Psoas muscle (tissue), 8 donors: ENCODE measurements at regions of chr7 and their contacts with region 1.

Region 1: GRCh38 chr7:150448789-150449147 is 1.7 kb upstream of the GIMAP8 start:
- DNase-seq: peak; percentile 61 to 76
- ATAC-seq: peak in 2 of 4 donors; percentile 62 to 74
- H3K4me3 ChIP-seq: no peak overlapping the region
- H3K27ac ChIP-seq: no peak overlapping the region
- H3K4me1 ChIP-seq: no peaks in the 10 kb centered on the region
- H3K27me3 ChIP-seq: peaks cover 0 to 29% (median 12%) of the 10 kb centered on the region in 3 donors
- CTCF ChIP-seq: peak; percentile 62

Region 2: DNA sequence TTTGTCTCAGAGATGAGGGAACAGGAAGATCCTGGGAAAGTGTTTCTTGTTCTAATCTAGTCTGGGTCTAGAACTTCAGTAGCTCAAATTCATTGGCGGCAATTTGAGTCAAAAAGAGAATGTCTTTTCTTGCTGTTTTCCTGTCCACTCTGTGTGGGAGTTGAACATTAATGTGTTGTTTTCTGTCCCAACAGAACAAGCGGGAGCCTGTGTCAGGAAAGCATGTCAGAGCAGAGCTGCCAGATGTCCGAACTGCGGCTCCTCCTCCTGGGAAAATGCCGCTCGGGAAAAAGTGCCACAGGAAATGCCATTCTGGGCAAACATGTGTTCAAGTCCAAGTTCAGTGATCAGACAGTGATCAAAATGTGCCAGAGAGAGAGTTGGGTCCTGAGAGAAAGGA is 17.7 kb after region 1 on chr7:
- intact Hi-C with region 1: no loop called
- DNase-seq: no peak
- ATAC-seq: no peak
- H3K4me3 ChIP-seq: peak overlapping the region; percentile 34
- H3K27ac ChIP-seq: no peak overlapping the region
- H3K4me1 ChIP-seq: no peaks in the 10 kb centered on the region
- H3K27me3 ChIP-seq: no peaks in the 10 kb centered on the region
- CTCF ChIP-seq: no peak

Region 3: DNA sequence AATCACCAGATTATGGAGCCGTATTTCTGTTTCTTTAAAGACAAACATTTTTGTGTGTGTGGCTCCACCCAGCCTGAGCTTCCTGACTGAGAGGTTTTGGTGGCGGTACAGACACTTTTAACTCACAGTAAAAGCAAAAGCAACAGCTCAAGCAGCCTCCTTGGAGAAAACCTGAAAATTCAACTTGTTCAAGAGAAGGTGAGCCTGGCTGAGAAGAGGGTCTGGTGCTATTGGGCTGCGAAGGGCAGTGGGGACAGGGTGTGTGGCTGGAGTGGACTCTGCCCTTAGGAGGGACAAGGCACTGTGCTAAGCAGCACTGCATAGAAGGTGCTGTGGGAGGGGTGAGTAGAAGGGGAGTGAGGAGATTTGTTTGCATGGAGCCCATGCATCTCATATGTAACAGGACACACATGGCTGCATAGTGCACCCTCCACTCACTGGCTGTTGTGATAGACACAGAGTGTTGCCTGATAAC is 66.0 kb after region 1 on chr7 and contains the start of gene GIMAP7:
- intact Hi-C with region 1: loop called in 1 of 2 experiments (anchors 1 kb)
- DNase-seq: no peak
- ATAC-seq: peak in 1 of 4 donors; percentile 37
- H3K4me3 ChIP-seq: peak within 1 kb of the TSS; percentile 61
- H3K27ac ChIP-seq: peak within 1 kb of the TSS; percentile 39
- H3K4me1 ChIP-seq: no peaks in the 10 kb centered on the region
- H3K27me3 ChIP-seq: no peaks in the 10 kb centered on the region
- CTCF ChIP-seq: no peak
- total RNA-seq, gene GIMAP7: 10.7 to 17.7 (median 11.4) TPM

Region 4: GRCh38 chr7:150631866-150632864 is 183.4 kb after region 1 on chr7 and contains the start of gene GIMAP6:
- intact Hi-C with region 1: loop called in 1 of 2 experiments (anchors 5 kb)
- DNase-seq: no peak
- ATAC-seq: peak in 2 of 4 donors; percentile 42 to 51
- H3K4me3 ChIP-seq: peak within 1 kb of the TSS; percentile 64
- H3K27ac ChIP-seq: peak within 1 kb of the TSS; percentile 74
- H3K4me1 ChIP-seq: no peaks in the 10 kb centered on the region
- H3K27me3 ChIP-seq: no peaks in the 10 kb centered on the region
- CTCF ChIP-seq: no peak
- total RNA-seq, gene GIMAP6: 10.3 to 21.8 (median 14.0) TPM

Region 5: DNA sequence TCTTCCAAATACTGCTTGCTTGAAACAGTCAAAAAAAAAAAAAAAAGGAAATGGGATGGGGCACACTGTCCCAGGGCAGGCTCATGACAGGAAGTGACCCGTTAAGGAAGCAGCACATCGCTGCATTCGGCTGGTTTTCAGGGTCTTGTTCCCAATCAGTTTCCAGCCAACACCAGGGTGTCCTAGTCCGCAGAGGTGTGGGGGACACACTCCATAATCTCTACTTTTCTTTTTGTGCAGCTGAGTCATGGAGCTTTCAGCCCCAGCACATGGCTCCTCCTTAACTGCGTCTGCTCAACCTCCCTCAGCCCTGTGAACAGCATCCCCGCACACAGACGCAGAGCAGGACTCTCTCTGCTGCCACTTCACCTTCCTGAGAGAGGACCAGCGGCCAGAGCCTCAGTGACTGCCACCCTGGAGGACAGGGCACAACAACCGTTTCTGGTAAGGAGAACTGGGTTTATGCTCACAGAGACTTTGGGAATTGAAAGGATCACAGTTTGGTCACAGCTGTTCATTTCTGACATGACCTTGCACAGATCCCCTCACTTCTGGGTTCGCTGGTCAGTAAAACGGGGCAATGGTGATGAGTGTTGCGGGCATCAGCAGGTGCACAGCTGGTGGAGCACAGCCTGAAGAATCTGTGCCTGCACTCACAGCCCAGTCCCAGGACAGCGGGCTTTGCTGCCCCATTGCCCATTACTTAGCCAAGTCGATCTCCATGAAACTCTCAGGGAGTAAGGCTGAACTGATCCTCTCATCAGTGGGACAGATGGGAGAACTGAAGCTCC is 288.7 kb after region 1 on chr7 and contains the start of gene GIMAP5:
- intact Hi-C with region 1: loop called in 1 of 2 experiments (anchors 5 kb)
- DNase-seq: peak in 1 of 2 donors; percentile 53
- ATAC-seq: peak in 2 of 4 donors; percentile 49 to 51
- H3K4me3 ChIP-seq: peak within 1 kb of the TSS; percentile 63
- H3K27ac ChIP-seq: peak within 1 kb of the TSS; percentile 70
- H3K4me1 ChIP-seq: no peaks in the 10 kb centered on the region
- H3K27me3 ChIP-seq: no peaks in the 10 kb centered on the region
- CTCF ChIP-seq: no peak
- total RNA-seq, gene GIMAP5: 4.1 to 8.4 (median 7.7) TPM

Region 6: DNA sequence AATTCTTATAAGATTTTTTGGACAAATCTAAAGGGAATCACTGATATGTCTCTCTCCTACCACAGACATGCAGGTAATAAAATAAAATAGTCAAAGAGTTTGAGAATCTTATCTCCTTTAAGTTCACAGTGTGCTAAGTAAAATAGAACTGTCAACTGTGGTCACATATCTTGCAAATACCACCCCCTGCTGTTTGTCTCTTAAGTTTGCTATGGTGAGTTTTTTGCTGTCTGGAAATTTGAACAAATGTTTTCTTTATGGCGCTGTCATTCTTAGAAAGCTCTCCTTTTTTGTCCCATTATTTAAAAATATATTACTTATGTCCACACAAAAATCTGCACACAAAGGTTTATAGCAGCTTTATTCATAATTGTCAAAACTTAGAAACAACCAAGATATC is 308.1 kb after region 1 on chr7:
- intact Hi-C with region 1: loop called in 1 of 2 experiments (anchors 5 kb)
- DNase-seq: no peak
- ATAC-seq: no peak
- H3K4me3 ChIP-seq: no peak overlapping the region
- H3K27ac ChIP-seq: no peak overlapping the region
- H3K4me1 ChIP-seq: no peaks in the 10 kb centered on the region
- H3K27me3 ChIP-seq: no peaks in the 10 kb centered on the region
- CTCF ChIP-seq: peak; percentile 17